ENCODE measurements at regions of chr1 and their contacts with region 1.

Region 1: GRCh38 chr1:44652445-44653106 is 21.7 kb downstream of the TMEM53 start:
- DNase-seq: peak; percentile 76
- ATAC-seq: peak; percentile 85 to 89

Region 2: DNA sequence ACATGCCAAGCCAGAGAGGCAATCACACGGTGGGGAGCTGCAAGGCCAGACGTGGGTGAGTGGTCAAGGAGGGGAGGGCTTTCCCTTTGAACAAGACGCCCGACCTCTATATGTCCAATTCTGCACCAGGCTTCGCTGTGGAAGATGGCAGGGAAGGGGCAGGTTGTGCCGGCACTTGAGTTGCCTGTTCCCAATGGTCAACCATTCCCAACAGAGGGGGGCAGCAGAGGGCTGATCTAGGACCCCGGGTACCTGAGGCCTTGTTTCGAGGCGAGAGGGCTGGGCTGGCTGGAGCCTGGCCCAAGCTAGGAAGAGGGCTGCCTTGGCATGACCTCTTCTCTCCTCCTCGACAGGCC is 43.2 kb before region 1 on chr1:
- intact Hi-C with region 1: loop called (anchors 1 to 5 kb)
- DNase-seq: peak; percentile 67
- ATAC-seq: peak; percentile 86 to 89

Region 3: DNA sequence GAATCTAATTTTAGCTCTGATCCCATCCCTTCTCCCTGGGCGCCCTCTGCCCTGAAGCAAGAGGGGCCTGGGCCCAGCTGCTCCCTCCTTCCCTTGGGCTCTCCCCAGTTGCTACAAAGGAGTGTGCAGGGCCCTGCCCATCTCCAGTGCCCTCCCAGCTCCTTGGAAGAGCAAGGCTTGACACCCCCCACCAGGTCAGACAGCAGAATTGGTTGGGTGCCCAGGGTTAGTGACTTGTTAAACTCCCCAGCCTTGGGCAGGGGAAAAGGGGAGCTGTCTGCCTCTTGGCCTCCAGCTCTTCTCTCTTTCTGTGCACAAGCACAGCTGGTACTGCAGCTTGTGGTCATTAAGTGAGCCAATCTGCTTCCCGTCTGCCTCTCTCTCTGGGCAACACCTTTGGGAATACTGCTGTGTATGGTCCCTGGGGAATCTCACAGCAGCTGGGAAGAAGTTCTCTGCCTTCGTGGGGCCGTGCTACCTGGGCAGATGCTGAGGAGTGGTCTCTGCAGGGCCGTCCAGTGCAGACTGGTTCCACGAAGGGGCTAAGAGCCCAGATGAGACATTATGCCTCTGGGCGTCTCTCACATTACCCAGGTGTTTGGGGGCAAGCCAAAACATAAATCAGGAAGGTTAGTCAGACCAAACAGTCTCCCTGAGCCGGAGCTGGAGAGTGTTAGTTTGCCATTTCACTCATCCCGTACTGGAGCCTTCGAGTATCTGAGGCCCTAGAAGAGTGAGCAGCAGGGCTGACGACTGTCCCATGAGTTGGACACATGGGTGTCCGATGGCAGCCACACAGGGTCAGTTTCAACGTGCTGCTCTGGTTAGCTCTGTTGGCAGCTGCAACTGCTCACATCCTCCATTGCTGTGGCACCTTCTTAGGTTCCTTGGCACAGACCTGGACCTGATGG is 15.6 kb before region 1 on chr1:
- intact Hi-C with region 1: no loop called
- DNase-seq: no peak
- ATAC-seq: peak in 1 of 2 donors; percentile 12

Measured in left cardiac atrium (tissue), 4 donors.